Naive thymus-derived CD4-positive, alpha-beta T cell (primary cell): ENCODE measurements at regions of chr3 and their contacts with region 1.

Region 1: GRCh38 chr3:184314363-184314699 is at the start of gene EIF4G1:
- DNase-seq: peak; percentile 89 to 95 (median 91)
- ATAC-seq: peak; percentile 95
- H3K4me3 ChIP-seq: peak within 1 kb of the TSS; percentile 73
- H3K4me3 Mint-ChIP-seq: peak within 1 kb of the TSS; percentile 79 to 94 (median 88)
- H3K27ac ChIP-seq: peak within 1 kb of the TSS; percentile 93
- H3K27ac Mint-ChIP-seq: peak within 1 kb of the TSS; percentile 68 to 95 (median 89)
- H3K4me1 ChIP-seq: peaks cover 0 to 17% of the 10 kb centered on the region in 2 donors
- H3K4me1 Mint-ChIP-seq: peaks cover 15 to 35% (median 28%) of the 10 kb centered on the region in 7 donors
- H3K27me3 ChIP-seq: no peaks in the 10 kb centered on the region
- H3K27me3 Mint-ChIP-seq: no peaks in the 10 kb centered on the region
- total RNA-seq, gene EIF4G1: 200 to 341 (median 256) TPM

Region 2: DNA sequence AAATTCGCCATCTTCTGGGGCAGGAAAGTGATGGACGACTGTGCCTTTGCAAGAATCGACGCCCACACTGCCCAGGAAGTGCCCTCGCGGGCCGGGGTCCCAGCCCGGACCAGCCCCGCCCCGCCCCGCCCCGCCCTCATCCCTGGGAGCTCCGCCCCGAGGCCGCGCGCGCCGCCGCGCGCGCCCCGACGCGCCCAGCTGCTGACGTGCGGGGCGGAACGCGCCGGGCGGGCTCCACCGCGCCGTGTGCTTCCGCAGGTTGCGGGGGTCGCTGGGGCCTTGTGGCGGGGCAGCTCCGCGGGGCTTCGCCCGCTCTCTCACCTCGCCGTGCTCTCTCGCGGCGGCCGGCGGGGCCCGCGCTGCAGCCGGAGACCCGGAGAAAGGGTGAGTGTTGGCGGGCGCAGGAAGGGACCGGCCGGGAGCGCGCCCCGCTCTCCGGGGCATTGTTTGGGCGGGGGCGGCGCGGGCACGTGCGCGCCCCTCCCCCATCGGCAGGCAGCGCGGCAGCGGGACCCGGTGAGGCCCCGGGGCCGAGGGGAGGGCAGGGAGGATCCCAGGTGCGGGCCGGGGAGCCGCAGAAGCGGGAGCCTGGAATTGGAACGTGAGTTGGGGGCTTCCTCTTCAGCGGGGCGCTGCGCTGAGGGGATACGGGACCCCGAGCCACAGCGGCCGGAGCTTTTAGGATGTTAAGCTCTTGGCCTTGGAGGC is 616.6 kb before region 1 on chr3 and contains the start of gene YEATS2:
- CTCF ChIA-PET with region 1: no interaction called
- POLR2A ChIA-PET with region 1: no interaction called
- intact Hi-C with region 1: loop called in 1 of 2 experiments (anchors 5 kb)
- DNase-seq: peak; percentile 60 to 81 (median 74)
- ATAC-seq: peak; percentile 95
- H3K4me3 ChIP-seq: peak within 1 kb of the TSS; percentile 89
- H3K4me3 Mint-ChIP-seq: peak within 1 kb of the TSS; percentile 84 to 99 (median 94)
- H3K27ac ChIP-seq: peak within 1 kb of the TSS; percentile 84
- H3K27ac Mint-ChIP-seq: peak within 1 kb of the TSS; percentile 74 to 97 (median 90)
- H3K4me1 ChIP-seq: peaks cover 9 to 18% of the 10 kb centered on the region in 2 donors
- H3K4me1 Mint-ChIP-seq: peaks cover 32 to 50% (median 40%) of the 10 kb centered on the region in 7 donors
- H3K27me3 ChIP-seq: no peaks in the 10 kb centered on the region
- H3K27me3 Mint-ChIP-seq: no peaks in the 10 kb centered on the region
- total RNA-seq, gene YEATS2: 20.6 to 61.4 (median 21.9) TPM

Region 3: GRCh38 chr3:184174646-184175492 is 139.5 kb before region 1 on chr3 and contains the start of gene AP2M1:
- CTCF ChIA-PET with region 1: no interaction called
- POLR2A ChIA-PET with region 1: interaction called, 3 read pairs
- intact Hi-C with region 1: loop called in 1 of 2 experiments (anchors 1 kb)
- DNase-seq: peak; percentile 98 to 99 (median 98)
- ATAC-seq: peak; percentile 98
- H3K4me3 ChIP-seq: peak within 1 kb of the TSS; percentile 82
- H3K4me3 Mint-ChIP-seq: peak within 1 kb of the TSS; percentile 89 to 98 (median 96)
- H3K27ac ChIP-seq: peak within 1 kb of the TSS; percentile 95
- H3K27ac Mint-ChIP-seq: peak within 1 kb of the TSS; percentile 75 to 94 (median 90)
- H3K4me1 ChIP-seq: peaks cover 18 to 20% of the 10 kb centered on the region in 2 donors
- H3K4me1 Mint-ChIP-seq: peaks cover 14 to 46% (median 38%) of the 10 kb centered on the region in 7 donors
- H3K27me3 ChIP-seq: no peaks in the 10 kb centered on the region
- H3K27me3 Mint-ChIP-seq: no peaks in the 10 kb centered on the region
- total RNA-seq, gene AP2M1: 111 to 217 (median 185) TPM

Region 4: DNA sequence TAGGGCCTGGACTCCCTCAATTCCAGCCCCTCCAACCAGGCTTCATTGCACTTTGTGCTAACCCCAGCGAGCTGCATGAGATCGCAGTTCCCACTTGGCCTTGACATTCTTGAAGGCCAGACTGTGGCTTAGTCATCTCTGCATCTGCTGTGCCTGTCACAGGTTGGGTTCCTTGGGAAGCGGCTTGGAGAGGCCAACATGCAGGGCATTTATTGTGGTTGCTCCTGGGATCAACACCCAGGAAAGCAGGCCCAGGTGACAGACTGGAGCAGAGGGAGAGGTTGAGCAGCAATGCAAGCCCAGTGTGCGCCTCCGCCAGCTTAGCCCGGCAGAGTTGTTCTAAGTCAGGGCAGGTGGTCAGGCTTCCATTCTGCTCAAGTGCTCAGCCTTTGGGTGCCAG is 117.8 kb before region 1 on chr3:
- CTCF ChIA-PET with region 1: no interaction called
- POLR2A ChIA-PET with region 1: no interaction called
- intact Hi-C with region 1: no loop called
- DNase-seq: no peak
- ATAC-seq: no peak
- H3K4me3 ChIP-seq: no peak overlapping the region
- H3K4me3 Mint-ChIP-seq: no peak overlapping the region
- H3K27ac ChIP-seq: no peak overlapping the region
- H3K27ac Mint-ChIP-seq: no peak overlapping the region
- H3K4me1 ChIP-seq: no peaks in the 10 kb centered on the region
- H3K4me1 Mint-ChIP-seq: no peaks in the 10 kb centered on the region
- H3K27me3 ChIP-seq: no peaks in the 10 kb centered on the region
- H3K27me3 Mint-ChIP-seq: no peaks in the 10 kb centered on the region

Region 5: GRCh38 chr3:184289426-184289938 is 24.8 kb before region 1 on chr3:
- CTCF ChIA-PET with region 1: no interaction called
- POLR2A ChIA-PET with region 1: no interaction called
- intact Hi-C with region 1: no loop called
- DNase-seq: peak in 8 of 9 donors; percentile 18 to 71 (median 38)
- ATAC-seq: peak; percentile 67
- H3K4me3 ChIP-seq: no peak overlapping the region
- H3K4me3 Mint-ChIP-seq: no peak overlapping the region
- H3K27ac ChIP-seq: no peak overlapping the region
- H3K27ac Mint-ChIP-seq: peak overlapping the region in 1 of 9 donors; percentile 34
- H3K4me1 ChIP-seq: no peaks in the 10 kb centered on the region
- H3K4me1 Mint-ChIP-seq: no peaks in the 10 kb centered on the region
- H3K27me3 ChIP-seq: no peaks in the 10 kb centered on the region
- H3K27me3 Mint-ChIP-seq: peaks cover 9 to 28% (median 11%) of the 10 kb centered on the region in 5 donors

Region 6: GRCh38 chr3:184335661-184336546 is 21.6 kb after region 1 on chr3:
- CTCF ChIA-PET with region 1: no interaction called
- POLR2A ChIA-PET with region 1: interaction called, 3 read pairs
- intact Hi-C with region 1: loop called (anchors 1 kb)
- DNase-seq: peak; percentile 78 to 96 (median 87)
- ATAC-seq: peak; percentile 86
- H3K4me3 ChIP-seq: peak overlapping the region; percentile 66
- H3K4me3 Mint-ChIP-seq: peak overlapping the region; percentile 88 to 96 (median 92)
- H3K27ac ChIP-seq: peak overlapping the region; percentile 96
- H3K27ac Mint-ChIP-seq: peak overlapping the region; percentile 76 to 99 (median 96)
- H3K4me1 ChIP-seq: peaks cover 8 to 10% of the 10 kb centered on the region in 2 donors
- H3K4me1 Mint-ChIP-seq: peaks cover 18 to 54% (median 22%) of the 10 kb centered on the region in 7 donors
- H3K27me3 ChIP-seq: no peaks in the 10 kb centered on the region
- H3K27me3 Mint-ChIP-seq: no peaks in the 10 kb centered on the region